ENCODE measurements at regions of chr14 and their contacts with region 1.

Region 1: GRCh38 chr14:70714055-70714621 is 72.4 kb downstream of the TTC9 start:
- DNase-seq: peak; percentile 50
- ATAC-seq: peak; percentile 63
- H3K4me3 ChIP-seq: no peak overlapping the region; the same call in 1 of the 2 replicates
- H3K27ac ChIP-seq: peak overlapping the region; percentile 52; the same call in 1 of the 2 replicates
- H3K4me1 ChIP-seq: peaks cover 6% of the 10 kb centered on the region
- H3K27me3 ChIP-seq: no peaks in the 10 kb centered on the region
- CTCF ChIP-seq: peak; percentile 42 to 55 (median 51); a peak in 5 of 6 replicates
- EP300 ChIP-seq: no peak
- POLR2A ChIP-seq: no peak
- RAD21 ChIP-seq: peak; percentile 72

Region 2: GRCh38 chr14:70600382-70601157 is 113.6 kb before region 1 on chr14 and contains the start of gene MED6:
- CTCF ChIA-PET with region 1: interaction called, 14 read pairs
- POLR2A ChIA-PET with region 1: interaction called, 3 read pairs
- RAD21 ChIA-PET with region 1: interaction called, 9 read pairs
- SMC1A ChIA-PET with region 1: interaction called, 35 read pairs
- in situ Hi-C with region 1: no loop called
- intact Hi-C with region 1: loop called (anchors 5 kb)
- DNase-seq: peak; percentile 69
- ATAC-seq: peak; percentile 97
- H3K4me3 ChIP-seq: peak within 1 kb of the TSS; percentile 90
- H3K27ac ChIP-seq: peak within 1 kb of the TSS; percentile 83
- H3K4me1 ChIP-seq: peaks cover 16% of the 10 kb centered on the region
- H3K27me3 ChIP-seq: no peaks in the 10 kb centered on the region
- CTCF ChIP-seq: no peak
- EP300 ChIP-seq: no peak
- POLR2A ChIP-seq: peak; percentile 81
- RAD21 ChIP-seq: no peak
- polyA plus RNA-seq, gene MED6: 36.6 to 40.0 TPM

Region 3: DNA sequence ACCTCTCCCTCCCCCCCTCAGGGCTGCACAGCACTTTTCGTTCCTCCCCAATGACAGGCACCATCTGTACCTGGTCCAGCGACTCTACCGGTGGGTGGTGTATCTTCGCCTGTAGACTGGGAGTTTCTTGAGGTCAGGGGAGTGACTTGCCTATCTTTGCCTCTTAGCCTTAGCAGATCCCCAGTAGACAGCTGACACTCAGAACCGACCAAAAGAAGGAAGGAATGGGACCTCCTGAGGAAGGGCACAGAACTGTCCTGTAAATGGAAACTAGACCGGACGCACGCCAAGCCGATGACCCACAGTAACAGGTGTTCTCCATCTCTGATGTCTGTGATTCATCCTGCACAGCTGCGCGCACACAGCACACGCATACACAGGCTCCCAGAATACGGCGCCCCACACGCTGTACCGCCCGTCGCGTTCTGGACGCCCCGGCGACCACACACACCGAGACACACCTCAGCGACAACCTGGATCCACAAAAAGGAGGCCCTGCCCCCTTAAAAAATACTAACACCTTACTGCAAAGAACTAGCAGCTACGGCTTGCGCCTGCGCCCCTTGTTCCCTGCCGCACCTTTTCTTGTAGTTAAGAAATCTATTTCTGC is 73.1 kb before region 1 on chr14:
- CTCF ChIA-PET with region 1: interaction called, 33 read pairs
- POLR2A ChIA-PET with region 1: interaction called, 9 read pairs
- RAD21 ChIA-PET with region 1: interaction called, 18 read pairs
- SMC1A ChIA-PET with region 1: interaction called, 120 read pairs
- in situ Hi-C with region 1: no loop called
- intact Hi-C with region 1: loop called (anchors 1 kb)
- DNase-seq: peak; percentile 60
- ATAC-seq: peak; percentile 77
- H3K4me3 ChIP-seq: peak overlapping the region; percentile 90
- H3K27ac ChIP-seq: peak overlapping the region; percentile 88
- H3K4me1 ChIP-seq: no peaks in the 10 kb centered on the region
- H3K27me3 ChIP-seq: no peaks in the 10 kb centered on the region
- CTCF ChIP-seq: peak in 2 of 3 experiments; percentile 10 to 14; a peak in 2 of 6 replicates
- EP300 ChIP-seq: 0 out of 4 replicates have a peak, but pooled peaks of 1 of the 2 experiments have one; percentile 32
- POLR2A ChIP-seq: peak; percentile 76
- RAD21 ChIP-seq: no peak

Region 4: DNA sequence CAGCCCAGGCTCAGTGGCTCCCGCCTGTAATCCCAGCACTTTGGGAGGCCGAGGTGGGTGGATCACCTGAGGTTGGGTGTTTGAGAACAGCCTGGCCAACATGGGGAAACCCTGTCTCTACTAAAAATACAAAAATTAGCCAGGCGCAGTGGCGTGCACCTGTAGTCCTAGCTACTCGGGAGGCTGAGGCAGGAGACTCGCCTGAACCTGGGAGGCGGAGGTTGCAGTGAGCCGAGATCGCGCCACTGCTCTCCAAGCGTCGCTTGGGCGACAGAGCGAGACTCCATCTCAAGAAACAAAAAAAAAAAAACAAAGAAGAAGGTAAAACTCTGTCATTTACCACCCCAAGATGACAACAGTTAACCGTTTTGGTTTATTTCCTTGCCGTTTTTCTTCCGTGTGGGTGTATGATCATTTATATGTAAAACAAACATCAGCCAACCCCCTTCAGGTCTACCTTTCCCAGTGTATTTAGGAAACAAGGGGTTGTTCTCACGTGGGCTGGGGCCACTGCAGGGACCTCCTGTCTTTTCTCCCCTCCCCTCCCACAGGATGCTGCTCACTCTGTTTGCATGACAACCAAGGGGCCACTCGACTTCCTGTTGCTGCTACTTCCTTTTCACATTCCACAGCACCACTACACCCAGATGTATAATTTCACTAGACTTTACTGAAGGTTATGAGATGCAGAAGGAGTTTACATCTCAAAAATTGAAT is 58.9 kb before region 1 on chr14:
- CTCF ChIA-PET with region 1: interaction called, 25 read pairs
- POLR2A ChIA-PET with region 1: interaction called, 8 read pairs
- RAD21 ChIA-PET with region 1: interaction called, 17 read pairs
- SMC1A ChIA-PET with region 1: interaction called, 66 read pairs
- in situ Hi-C with region 1: no loop called
- intact Hi-C with region 1: no loop called
- DNase-seq: peak; percentile 88
- ATAC-seq: peak; percentile 87
- H3K4me3 ChIP-seq: peak overlapping the region; percentile 61
- H3K27ac ChIP-seq: peak overlapping the region; percentile 99
- H3K4me1 ChIP-seq: peaks cover 73% of the 10 kb centered on the region
- H3K27me3 ChIP-seq: no peaks in the 10 kb centered on the region
- CTCF ChIP-seq: no peak
- EP300 ChIP-seq: peak in 1 of 2 experiments; percentile 21; a peak in 1 of 4 replicates
- POLR2A ChIP-seq: 0 out of 2 replicates have a peak, but pooled peaks have one; percentile 35
- RAD21 ChIP-seq: no peak

Region 5: GRCh38 chr14:70700952-70701585 is 13.1 kb before region 1 on chr14:
- CTCF ChIA-PET with region 1: interaction called, 16 read pairs
- POLR2A ChIA-PET with region 1: no interaction called
- RAD21 ChIA-PET with region 1: interaction called, 5 read pairs
- SMC1A ChIA-PET with region 1: interaction called, 21 read pairs
- in situ Hi-C with region 1: no loop called
- intact Hi-C with region 1: no loop called
- DNase-seq: no peak
- ATAC-seq: no peak
- H3K4me3 ChIP-seq: no peak overlapping the region
- H3K27ac ChIP-seq: no peak overlapping the region
- H3K4me1 ChIP-seq: peaks cover 3% of the 10 kb centered on the region
- H3K27me3 ChIP-seq: no peaks in the 10 kb centered on the region
- CTCF ChIP-seq: no peak
- EP300 ChIP-seq: no peak
- POLR2A ChIP-seq: no peak
- RAD21 ChIP-seq: no peak

Region 6: DNA sequence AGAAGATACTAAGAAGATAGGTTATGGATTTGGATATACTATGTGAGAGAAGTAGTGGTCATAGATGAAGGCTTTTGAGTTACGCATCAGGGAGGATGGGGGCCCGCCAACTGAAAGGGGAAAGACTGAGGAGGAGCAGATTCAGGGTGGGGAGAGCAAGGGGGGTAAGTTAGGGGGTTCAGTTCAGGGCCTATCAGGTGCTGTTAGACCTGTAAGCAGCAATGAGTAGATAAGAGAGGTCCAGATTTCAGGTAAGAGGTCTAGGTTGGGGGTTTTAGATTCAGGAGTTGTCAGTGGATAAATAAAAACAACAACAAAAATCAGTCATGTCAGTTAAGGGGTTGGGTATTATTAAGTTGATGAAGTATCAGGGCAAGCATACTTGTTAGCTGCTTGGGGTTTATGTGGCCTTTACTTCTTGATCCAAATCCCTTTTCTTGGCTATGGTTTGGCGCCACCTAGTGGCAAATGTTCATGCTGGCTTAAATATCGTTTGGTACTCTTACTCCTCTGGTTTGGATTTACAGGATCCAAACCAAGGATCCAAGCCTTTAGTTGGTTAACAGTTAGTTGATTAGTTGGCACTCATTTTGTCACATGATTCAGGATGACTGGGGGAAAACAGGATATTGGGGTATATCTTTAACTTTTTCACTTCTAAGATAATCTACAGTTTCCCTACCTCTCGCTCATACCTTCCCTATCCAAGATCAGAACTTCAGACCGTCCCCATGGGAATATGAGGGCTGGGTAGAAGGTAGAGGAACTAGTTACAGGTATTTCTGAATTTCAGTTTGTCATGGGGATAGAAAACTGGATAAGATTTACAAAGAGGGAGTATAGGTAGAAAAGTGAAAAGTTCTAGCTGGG is 258.2 kb after region 1 on chr14:
- CTCF ChIA-PET with region 1: interaction called, 3 read pairs
- POLR2A ChIA-PET with region 1: no interaction called
- RAD21 ChIA-PET with region 1: no interaction called
- SMC1A ChIA-PET with region 1: no interaction called
- in situ Hi-C with region 1: no loop called
- intact Hi-C with region 1: loop called (anchors 10 kb)
- DNase-seq: peak; percentile 44
- ATAC-seq: peak; percentile 94
- H3K4me3 ChIP-seq: no peak overlapping the region
- H3K27ac ChIP-seq: no peak overlapping the region
- H3K4me1 ChIP-seq: no peaks in the 10 kb centered on the region
- H3K27me3 ChIP-seq: no peaks in the 10 kb centered on the region
- CTCF ChIP-seq: peak; percentile 79 to 91 (median 83)
- EP300 ChIP-seq: no peak
- POLR2A ChIP-seq: no peak
- RAD21 ChIP-seq: peak; percentile 92

Region 7: GRCh38 chr14:71155743-71156142 is 441.6 kb after region 1 on chr14:
- CTCF ChIA-PET with region 1: no interaction called
- POLR2A ChIA-PET with region 1: no interaction called
- RAD21 ChIA-PET with region 1: no interaction called
- SMC1A ChIA-PET with region 1: no interaction called
- in situ Hi-C with region 1: no loop called
- intact Hi-C with region 1: no loop called
- DNase-seq: no peak
- ATAC-seq: no peak
- H3K4me3 ChIP-seq: no peak overlapping the region
- H3K27ac ChIP-seq: no peak overlapping the region
- H3K4me1 ChIP-seq: no peaks in the 10 kb centered on the region
- H3K27me3 ChIP-seq: no peaks in the 10 kb centered on the region
- CTCF ChIP-seq: no peak
- EP300 ChIP-seq: no peak
- POLR2A ChIP-seq: no peak
- RAD21 ChIP-seq: no peak

Measured in GM12878 (cell line).